ENCODE measurements at regions of chr11 and their contacts with region 1.

Region 1: DNA sequence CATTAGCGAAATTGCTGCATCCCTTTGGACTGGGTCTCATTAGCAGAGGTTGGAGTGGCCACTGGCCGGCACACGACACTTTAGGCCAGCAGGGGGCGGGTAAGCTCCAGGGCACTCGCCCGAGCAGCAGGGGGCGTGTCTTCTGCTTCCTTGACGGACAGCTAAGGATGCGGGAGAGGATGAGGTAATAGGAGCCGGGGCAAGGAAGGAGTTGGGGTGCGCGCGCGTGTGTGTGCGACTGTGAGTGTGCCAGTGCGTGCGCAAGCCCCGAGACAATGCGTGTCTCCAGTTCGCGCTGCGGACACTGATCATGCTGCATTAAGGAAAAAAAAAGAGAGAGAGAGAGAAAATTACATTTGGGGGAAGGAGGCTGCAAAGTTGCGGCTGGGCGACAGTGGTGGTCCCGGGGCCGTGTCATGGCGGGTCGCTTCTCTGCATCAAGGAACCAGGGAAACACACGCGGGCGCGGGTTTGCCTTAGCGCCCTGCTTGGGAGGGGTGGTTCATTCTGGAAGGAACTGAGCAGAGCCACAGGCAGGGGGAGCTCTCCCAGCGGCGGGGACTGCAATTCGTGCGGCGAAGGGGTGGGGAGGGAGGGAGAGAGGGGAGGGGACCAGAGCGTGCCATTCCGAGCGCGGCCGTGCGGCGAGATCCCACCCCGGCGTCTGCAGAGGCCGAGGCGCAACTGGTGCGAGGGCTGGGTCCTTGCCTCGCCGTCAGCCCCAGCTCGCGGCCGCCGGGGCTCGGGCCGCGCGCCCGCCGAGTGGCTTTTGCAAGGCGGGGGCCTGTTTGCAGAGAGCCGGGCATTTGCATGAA is at the start of gene DTX4:
- DNase-seq: peak; percentile 92 to 93
- H3K4me3 ChIP-seq: peak within 1 kb of the TSS; percentile 58 to 72
- H3K27ac ChIP-seq: no peak within 1 kb of the TSS
- H3K4me1 ChIP-seq: peaks cover 0 to 19% (median 15%) of the 10 kb centered on the region in 4 donors
- H3K27me3 ChIP-seq: no peaks in the 10 kb centered on the region
- CTCF ChIP-seq: peak; percentile 83 to 95

Region 2: GRCh38 chr11:59144579-59145345 is 27.0 kb before region 1 on chr11:
- intact Hi-C with region 1: no loop called
- DNase-seq: peak; percentile 81 to 92
- H3K4me3 ChIP-seq: peak overlapping the region; percentile 52 to 89
- H3K27ac ChIP-seq: peak overlapping the region; percentile 88 to 90
- H3K4me1 ChIP-seq: peaks cover 0 to 25% (median 8%) of the 10 kb centered on the region in 4 donors
- H3K27me3 ChIP-seq: no peaks in the 10 kb centered on the region
- CTCF ChIP-seq: no peak

Region 3: DNA sequence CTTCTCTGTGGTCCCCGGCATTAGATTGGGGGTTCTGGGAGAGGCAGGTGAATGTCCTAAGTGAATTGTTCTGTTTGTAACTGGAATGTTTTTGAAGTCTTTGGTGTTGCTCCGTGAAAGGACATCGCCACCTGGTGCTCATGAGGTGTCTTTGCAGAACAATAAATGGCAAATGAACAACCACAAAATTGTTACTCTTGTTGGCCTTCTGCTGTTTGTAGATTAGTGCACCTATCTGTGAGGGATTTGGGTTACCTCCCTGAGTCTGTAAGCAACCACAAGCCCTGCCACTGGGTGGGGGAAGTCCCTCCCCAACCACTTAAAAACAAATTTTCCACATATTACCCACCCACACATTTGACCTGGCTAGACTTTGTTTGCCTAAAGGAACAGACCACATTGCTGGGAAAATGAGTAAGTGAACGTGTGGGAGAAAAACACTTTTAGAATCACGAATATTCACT is 36.3 kb after region 1 on chr11:
- intact Hi-C with region 1: loop called (anchors 2 kb)
- DNase-seq: no peak
- H3K4me3 ChIP-seq: no peak overlapping the region
- H3K27ac ChIP-seq: peak overlapping the region; percentile 23 to 33
- H3K4me1 ChIP-seq: peaks cover 0 to 20% (median 13%) of the 10 kb centered on the region in 4 donors
- H3K27me3 ChIP-seq: no peaks in the 10 kb centered on the region
- CTCF ChIP-seq: peak; percentile 78 to 80

Region 4: GRCh38 chr11:59283825-59284772 is 112.4 kb after region 1 on chr11:
- intact Hi-C with region 1: loop called (anchors 5 kb)
- DNase-seq: peak in 1 of 2 donors; percentile 41
- H3K4me3 ChIP-seq: no peak overlapping the region
- H3K27ac ChIP-seq: no peak overlapping the region
- H3K4me1 ChIP-seq: no peaks in the 10 kb centered on the region
- H3K27me3 ChIP-seq: peaks cover 0 to 11% of the 10 kb centered on the region in 2 donors
- CTCF ChIP-seq: peak; percentile 72 to 82

Measured in tibial artery (tissue), 4 donors.